Gastrocnemius medialis (tissue), 4 donors: ENCODE measurements at regions of chr4 and their contacts with region 1.

Region 1: DNA sequence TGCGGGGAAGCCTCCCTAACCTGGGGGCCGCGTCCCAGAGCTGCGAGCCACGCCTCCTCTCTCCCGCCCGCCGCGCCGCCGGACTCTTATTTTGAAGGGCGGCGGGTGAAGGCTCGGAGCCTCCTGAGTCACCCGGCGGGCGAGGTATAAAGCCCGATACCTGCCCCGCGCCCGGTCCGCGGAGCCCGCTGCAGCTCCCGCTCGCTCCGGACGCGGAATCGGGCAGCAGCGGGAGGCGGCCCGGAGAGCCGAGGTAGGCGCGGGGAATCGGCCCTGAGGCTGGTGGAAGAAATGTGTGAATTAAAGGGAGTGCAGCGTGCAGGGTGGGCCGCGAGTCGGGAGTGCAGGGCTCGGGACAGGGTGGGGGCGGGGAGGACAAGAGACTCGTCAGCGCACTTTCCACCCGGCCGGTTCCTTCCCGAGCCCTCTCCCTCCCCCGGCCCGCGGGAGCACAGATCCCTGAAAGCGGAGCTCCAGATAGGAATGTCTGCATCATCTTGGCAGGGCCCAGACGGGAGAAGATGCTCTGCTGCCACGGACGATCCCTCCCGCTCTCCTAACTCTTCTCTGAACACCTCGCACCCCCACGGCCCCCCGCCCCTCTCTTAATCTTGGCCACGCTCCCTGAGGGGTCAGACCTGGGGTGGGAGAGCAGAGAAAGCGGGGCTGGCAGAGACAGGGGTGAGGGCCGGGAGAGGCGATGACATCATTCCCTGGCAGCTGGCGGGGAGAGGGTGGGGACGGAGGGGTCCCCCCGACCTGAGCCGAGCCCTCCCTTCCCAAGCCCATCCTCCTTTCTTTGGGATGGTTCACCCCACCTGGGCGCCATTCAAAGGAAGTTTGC is 177.9 kb downstream of the CBR4 start:
- DNase-seq: peak; percentile 80 to 84
- ATAC-seq: peak; percentile 87 to 90
- H3K4me3 ChIP-seq: peak overlapping the region; percentile 74 to 96 (median 82)
- H3K27ac ChIP-seq: peak overlapping the region; percentile 83 to 92 (median 89)
- H3K4me1 ChIP-seq: peaks cover 29 to 30% of the 10 kb centered on the region in 2 donors
- H3K27me3 ChIP-seq: no peaks in the 10 kb centered on the region
- CTCF ChIP-seq: peak in 1 of 5 experiments; percentile 13
- POLR2A ChIP-seq: peak; percentile 90 to 92

Region 2: DNA sequence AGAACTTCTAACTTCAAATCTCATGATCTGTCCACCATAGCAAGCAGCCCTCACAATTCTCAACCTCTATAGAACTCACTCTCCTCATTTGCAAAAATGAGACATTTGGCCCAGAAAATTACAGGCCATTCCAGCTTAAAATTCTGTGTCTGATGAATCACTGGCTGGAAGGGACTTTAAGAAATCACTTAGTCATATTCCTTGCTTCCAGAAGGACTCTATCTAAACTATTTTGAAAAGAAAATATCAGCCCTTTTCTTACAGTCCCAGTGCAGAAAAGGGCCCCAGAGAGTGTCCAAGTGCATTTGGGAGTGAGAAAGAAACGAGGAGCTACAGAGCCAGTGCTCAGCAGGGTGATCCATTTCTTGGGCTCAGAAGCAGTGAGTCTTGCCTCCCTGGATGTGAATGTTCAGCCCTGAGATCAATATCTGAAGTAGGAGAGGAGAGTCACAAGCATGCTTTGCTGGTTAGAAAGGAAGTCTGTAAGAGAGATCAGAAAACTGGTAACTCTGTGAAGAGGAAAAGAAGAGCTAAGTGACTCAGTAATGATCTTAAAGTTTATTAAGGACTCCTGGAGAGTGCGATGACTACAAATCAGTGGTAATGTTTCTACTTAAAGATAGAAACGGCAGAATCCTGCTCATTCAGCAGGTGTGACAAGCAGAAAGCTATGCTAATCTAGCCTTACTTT is 195.5 kb before region 1 on chr4:
- in situ Hi-C with region 1: no loop called
- intact Hi-C with region 1: loop called (anchors 5 kb)
- DNase-seq: no peak
- ATAC-seq: no peak
- H3K4me3 ChIP-seq: no peak overlapping the region
- H3K27ac ChIP-seq: peak overlapping the region; percentile 77 to 89 (median 81)
- H3K4me1 ChIP-seq: peaks cover 50 to 60% of the 10 kb centered on the region in 2 donors
- H3K27me3 ChIP-seq: no peaks in the 10 kb centered on the region
- CTCF ChIP-seq: no peak
- POLR2A ChIP-seq: no peak

Region 3: DNA sequence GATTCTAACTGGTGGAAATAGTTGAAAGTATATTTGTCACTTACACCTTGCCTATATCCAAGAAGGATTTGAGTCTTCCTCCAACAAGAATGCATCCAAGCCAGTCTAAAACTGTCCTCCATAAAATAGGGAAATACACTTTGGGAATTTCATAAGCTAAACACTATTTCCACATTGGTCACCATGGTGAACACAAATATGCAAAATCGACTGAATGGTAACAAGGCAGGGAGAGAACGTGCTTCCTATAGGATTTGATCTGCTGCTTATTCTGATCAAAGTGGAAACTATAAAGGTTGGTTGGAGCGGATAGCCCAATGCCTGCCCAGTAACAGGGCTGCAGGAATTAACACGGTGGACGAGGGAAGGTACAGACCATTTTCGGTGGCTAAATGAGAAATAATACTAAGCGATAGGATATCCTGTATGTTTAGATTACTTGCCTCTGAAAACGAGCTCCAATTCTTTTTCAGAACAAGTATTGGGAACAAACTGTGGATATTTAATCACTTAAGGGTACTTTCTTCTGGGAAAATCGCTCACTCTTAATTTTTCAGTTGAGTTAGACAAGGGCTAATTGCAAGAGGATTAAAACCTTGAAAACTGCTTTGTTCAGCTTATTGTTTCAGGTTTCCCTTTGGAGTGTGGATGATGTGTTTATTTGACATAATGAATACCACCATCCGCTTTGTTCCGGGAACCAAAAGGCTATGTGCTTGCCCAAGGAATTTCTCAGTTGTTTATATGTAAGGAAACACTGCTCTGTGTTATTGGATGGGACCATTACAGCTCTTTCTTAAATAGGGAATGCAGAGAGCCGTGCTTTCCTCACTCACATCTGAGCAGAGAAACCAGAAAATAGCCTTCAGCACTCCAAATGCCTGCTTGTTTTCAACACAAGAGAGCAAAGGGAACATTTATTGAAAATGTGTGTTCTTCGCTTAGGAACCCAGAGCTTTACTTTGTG is 16.5 kb before region 1 on chr4:
- in situ Hi-C with region 1: no loop called
- intact Hi-C with region 1: loop called (anchors 1 kb)
- DNase-seq: no peak
- ATAC-seq: no peak
- H3K4me3 ChIP-seq: peak overlapping the region in 3 of 4 donors; percentile 32 to 39 (median 36)
- H3K27ac ChIP-seq: peak overlapping the region; percentile 61 to 81 (median 66)
- H3K4me1 ChIP-seq: peaks cover 36 to 50% of the 10 kb centered on the region in 2 donors
- H3K27me3 ChIP-seq: no peaks in the 10 kb centered on the region
- CTCF ChIP-seq: no peak
- POLR2A ChIP-seq: no peak

Region 4: DNA sequence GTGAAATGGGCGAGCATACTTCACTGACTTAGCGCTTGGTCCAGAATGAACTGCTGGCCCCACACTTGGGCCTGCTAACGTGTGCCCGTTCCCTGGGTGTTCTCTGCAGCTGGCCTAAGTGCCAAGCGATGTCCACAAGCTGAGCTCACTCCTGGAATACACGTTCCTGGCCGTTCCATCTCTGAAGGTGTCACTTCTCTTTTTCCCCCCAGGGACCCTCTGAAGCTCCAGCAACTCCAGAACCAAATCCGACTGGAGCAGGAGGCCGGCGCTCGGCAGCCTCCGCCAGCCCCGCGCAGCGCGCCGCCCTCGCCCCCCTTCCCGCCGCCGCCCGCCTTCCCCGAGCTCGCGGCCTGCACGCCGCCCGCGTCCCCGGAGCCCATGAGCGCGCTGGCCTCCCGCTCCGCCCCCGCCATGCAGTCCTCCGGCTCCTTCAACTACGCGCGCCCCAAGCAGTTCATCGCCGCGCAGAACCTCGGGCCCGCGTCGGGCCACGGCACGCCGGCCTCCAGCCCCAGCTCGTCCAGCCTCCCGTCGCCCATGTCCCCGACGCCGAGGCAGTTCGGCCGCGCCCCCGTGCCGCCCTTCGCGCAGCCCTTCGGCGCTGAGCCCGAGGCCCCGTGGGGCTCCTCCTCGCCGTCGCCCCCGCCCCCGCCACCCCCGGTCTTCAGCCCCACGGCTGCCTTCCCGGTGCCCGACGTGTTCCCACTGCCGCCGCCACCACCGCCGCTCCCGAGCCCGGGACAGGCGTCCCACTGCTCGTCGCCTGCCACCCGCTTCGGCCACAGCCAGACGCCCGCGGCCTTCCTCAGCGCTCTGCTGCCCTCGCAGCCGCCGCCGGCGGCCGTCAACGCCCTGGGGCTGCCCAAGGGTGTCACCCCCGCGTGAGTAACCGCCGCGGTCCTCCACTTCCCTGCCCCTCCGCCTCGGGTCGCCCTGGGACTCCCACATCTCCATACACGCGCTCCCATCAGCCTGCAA is 45.7 kb after region 1 on chr4:
- in situ Hi-C with region 1: no loop called
- intact Hi-C with region 1: no loop called
- DNase-seq: peak in 1 of 2 donors; percentile 52
- ATAC-seq: peak; percentile 55
- H3K4me3 ChIP-seq: peak overlapping the region; percentile 38 to 48 (median 44)
- H3K27ac ChIP-seq: peak overlapping the region; percentile 55 to 78 (median 74)
- H3K4me1 ChIP-seq: peaks cover 38 to 40% of the 10 kb centered on the region in 2 donors
- H3K27me3 ChIP-seq: no peaks in the 10 kb centered on the region
- CTCF ChIP-seq: no peak
- POLR2A ChIP-seq: no peak

Region 5: GRCh38 chr4:168917138-168917779 is 85.1 kb after region 1 on chr4:
- in situ Hi-C with region 1: loop called in 1 of 4 experiments (anchors 5 kb)
- intact Hi-C with region 1: loop called (anchors 5 kb)
- DNase-seq: no peak
- ATAC-seq: peak in 1 of 2 donors; percentile 31
- H3K4me3 ChIP-seq: no peak overlapping the region
- H3K27ac ChIP-seq: peak overlapping the region in 3 of 4 donors; percentile 28 to 49 (median 47)
- H3K4me1 ChIP-seq: peaks cover 0 to 6% of the 10 kb centered on the region in 2 donors
- H3K27me3 ChIP-seq: no peaks in the 10 kb centered on the region
- CTCF ChIP-seq: peak; percentile 48 to 82 (median 64)
- POLR2A ChIP-seq: no peak

Region 6: GRCh38 chr4:168955674-168956073 is 123.5 kb after region 1 on chr4:
- in situ Hi-C with region 1: no loop called
- intact Hi-C with region 1: no loop called
- DNase-seq: no peak
- ATAC-seq: no peak
- H3K4me3 ChIP-seq: no peak overlapping the region
- H3K27ac ChIP-seq: no peak overlapping the region
- H3K4me1 ChIP-seq: peaks cover 10 to 13% of the 10 kb centered on the region in 2 donors
- H3K27me3 ChIP-seq: no peaks in the 10 kb centered on the region
- CTCF ChIP-seq: no peak
- POLR2A ChIP-seq: no peak